Psoas muscle (tissue), 8 donors: ENCODE measurements at regions of chr19 and their contacts with region 1.

Region 1: GRCh38 chr19:49840736-49841249 is 10.2 kb upstream of the PTOV1 start:
- DNase-seq: no peak
- ATAC-seq: no peak
- H3K4me3 ChIP-seq: no peak overlapping the region
- H3K27ac ChIP-seq: peak overlapping the region; percentile 72
- H3K4me1 ChIP-seq: peaks cover 29% of the 10 kb centered on the region
- H3K27me3 ChIP-seq: no peaks in the 10 kb centered on the region
- CTCF ChIP-seq: no peak

Region 2: DNA sequence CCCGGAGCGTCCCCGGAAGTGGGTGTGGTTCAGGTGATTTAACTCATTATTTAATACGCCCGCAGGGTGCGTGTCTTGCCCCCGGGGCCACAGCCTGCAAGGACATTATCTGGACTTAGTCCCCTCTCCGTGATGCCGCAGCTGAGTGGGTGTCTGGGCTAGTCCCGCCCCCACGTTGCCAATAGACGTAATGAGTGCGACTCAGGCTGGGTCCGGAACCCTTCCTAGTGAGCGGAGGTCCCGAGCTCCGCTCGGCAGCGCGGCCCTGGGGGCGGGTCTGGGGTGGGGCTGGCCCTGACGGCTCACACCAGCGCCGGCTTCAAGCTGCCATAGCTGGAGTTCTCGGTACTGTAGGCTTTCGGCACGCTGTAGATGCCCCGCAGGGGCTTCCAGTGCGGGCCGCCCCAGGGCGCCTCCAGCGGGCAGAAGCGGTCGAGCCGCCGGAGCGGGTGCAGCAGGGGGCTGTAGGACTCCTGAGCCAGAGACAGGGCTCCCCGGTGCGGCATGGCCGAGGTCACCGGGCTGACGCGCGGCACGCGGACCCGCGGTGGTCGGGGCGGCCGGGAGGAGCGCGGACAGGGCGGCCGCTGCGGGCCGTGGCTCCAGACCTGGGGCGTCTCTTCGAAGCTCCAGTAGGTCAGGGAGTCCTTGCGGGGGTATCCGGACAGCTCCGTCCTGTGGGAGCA is 823.0 kb before region 1 on chr19:
- intact Hi-C with region 1: no loop called
- DNase-seq: peak; percentile 62 to 80
- ATAC-seq: peak; percentile 71 to 78 (median 75)
- H3K4me3 ChIP-seq: peak overlapping the region; percentile 66
- H3K27ac ChIP-seq: no peak overlapping the region
- H3K4me1 ChIP-seq: peaks cover 7% of the 10 kb centered on the region
- H3K27me3 ChIP-seq: no peaks in the 10 kb centered on the region
- CTCF ChIP-seq: peak; percentile 50

Region 3: DNA sequence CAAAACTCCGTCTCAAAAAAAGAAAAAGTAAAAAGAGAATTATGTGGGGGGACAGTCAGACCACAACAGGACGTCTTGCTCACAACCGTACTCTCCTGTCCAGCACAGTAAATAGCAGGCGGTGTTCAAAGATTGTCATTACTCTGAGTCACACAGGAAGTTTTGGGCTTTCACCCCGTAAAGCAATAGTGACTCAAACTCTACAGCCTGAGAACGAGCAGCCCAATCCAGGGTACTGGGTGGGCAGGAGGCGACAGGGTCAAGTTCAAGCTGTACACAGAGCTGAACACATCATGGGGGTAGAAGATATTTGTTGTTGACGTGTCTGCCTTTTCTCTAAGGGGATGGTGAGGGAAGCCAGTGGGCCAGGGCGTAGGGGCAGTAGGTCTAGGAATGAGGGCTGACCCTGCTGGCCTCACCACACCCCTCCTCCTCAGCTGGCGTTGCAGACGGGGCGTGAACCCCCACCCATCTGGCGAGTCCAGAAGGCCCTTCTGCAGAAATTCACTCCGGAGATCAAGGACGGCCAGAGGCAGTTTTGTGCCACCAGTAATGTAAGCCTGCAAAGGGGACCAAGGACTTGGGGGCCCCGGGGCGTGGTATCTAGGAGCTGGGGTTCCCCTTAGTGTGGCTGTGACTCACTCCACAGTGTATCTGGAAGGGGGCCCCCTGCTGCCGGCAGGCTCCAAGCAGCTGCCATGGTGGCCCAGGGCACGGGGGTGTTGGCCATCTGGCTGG is 226.5 kb before region 1 on chr19:
- intact Hi-C with region 1: no loop called
- DNase-seq: no peak
- ATAC-seq: peak in 2 of 4 donors; percentile 13 to 15
- H3K4me3 ChIP-seq: no peak overlapping the region
- H3K27ac ChIP-seq: no peak overlapping the region
- H3K4me1 ChIP-seq: peaks cover 7% of the 10 kb centered on the region
- H3K27me3 ChIP-seq: no peaks in the 10 kb centered on the region
- CTCF ChIP-seq: no peak

Region 4: GRCh38 chr19:49793445-49793783 is 47.4 kb before region 1 on chr19:
- intact Hi-C with region 1: no loop called
- DNase-seq: no peak
- ATAC-seq: peak; percentile 30 to 72 (median 60)
- H3K4me3 ChIP-seq: no peak overlapping the region
- H3K27ac ChIP-seq: no peak overlapping the region
- H3K4me1 ChIP-seq: no peaks in the 10 kb centered on the region
- H3K27me3 ChIP-seq: no peaks in the 10 kb centered on the region
- CTCF ChIP-seq: no peak

Region 5: DNA sequence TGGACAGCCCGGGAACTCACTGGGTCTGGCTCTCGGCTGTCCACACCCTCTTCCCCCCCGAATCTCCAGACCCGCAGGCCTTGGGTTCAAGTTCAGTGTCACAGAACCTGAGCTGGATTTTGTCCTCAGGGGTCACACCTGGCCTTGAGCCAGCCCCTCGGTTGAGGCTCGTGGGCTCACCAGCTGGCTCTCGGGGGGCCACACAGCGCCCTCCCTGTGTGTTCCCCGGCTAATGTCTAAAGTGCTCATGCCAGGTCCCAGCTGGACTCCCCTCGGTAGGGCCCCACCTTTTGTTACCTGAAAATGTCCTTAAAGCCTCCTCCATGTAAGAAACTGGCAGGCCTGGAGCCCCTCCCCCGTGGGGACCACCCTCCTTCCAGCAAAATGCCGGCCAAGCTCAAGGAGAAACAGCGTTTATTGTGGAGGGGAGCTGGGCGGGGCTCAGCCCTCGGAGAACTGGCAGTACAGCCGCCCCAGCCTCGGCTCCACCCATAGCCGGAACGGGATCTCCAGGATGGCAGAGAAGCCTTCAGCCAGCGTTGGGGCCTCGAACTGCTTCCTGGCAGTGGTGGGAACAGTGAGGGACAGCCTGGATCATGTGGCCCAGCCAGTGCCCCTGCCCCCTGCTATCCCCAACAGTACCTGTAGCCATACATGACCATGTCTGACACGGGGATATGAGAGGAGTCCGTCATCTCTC is 20.2 kb after region 1 on chr19:
- intact Hi-C with region 1: loop called in 1 of 2 experiments (anchors 1 kb)
- DNase-seq: peak in 1 of 2 donors; percentile 76
- ATAC-seq: peak in 2 of 4 donors; percentile 21 to 35
- H3K4me3 ChIP-seq: no peak overlapping the region
- H3K27ac ChIP-seq: no peak overlapping the region
- H3K4me1 ChIP-seq: peaks cover 11% of the 10 kb centered on the region
- H3K27me3 ChIP-seq: no peaks in the 10 kb centered on the region
- CTCF ChIP-seq: no peak